ENCODE measurements at regions of chr7 and their contacts with region 1.

Region 1: GRCh38 chr7:17402628-17403278 is 104.3 kb downstream of the AHR start:
- DNase-seq: no peak
- H3K4me3 Mint-ChIP-seq: peak overlapping the region; percentile 22
- H3K27ac Mint-ChIP-seq: peak overlapping the region; percentile 81
- H3K4me1 Mint-ChIP-seq: peaks cover 35% of the 10 kb centered on the region
- H3K27me3 Mint-ChIP-seq: peaks cover 2% of the 10 kb centered on the region

Region 2: DNA sequence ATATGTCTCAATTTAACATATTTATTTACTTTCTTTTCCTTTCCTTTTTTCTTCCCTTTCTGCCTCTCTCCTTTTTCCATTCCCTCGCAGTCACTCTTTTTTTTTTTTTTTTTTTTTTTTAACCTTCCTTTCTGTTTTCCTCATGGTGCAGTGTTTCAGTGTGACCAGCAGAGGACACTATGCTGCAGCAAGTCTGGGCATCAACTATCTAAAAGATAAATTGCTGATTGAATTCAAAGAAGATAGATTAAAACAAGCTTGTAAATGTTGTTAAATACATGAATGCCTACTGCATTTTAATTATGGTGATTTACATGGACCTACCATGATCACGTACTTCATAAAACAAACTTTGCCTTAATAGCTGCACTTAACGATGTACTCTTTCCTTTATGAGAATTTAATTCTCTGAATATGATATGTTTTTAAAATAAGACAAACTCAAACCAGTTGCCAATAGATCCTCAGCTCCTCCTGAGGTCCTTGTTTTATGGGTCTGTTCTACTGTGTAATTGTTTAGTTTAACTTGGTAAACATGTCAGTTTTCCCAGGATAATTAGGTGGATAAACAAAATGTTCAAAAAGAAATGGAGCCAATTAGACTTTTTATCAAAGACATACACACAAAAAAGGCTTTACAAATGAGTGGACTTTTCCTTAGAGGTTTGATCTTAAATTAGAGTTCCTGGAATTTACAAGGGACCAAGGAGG is 420.0 kb before region 1 on chr7:
- intact Hi-C with region 1: loop called (anchors 2 kb)
- DNase-seq: no peak
- H3K4me3 Mint-ChIP-seq: peak overlapping the region; percentile 51
- H3K27ac Mint-ChIP-seq: no peak overlapping the region
- H3K4me1 Mint-ChIP-seq: peaks cover 17% of the 10 kb centered on the region
- H3K27me3 Mint-ChIP-seq: peaks cover 49% of the 10 kb centered on the region

Region 3: DNA sequence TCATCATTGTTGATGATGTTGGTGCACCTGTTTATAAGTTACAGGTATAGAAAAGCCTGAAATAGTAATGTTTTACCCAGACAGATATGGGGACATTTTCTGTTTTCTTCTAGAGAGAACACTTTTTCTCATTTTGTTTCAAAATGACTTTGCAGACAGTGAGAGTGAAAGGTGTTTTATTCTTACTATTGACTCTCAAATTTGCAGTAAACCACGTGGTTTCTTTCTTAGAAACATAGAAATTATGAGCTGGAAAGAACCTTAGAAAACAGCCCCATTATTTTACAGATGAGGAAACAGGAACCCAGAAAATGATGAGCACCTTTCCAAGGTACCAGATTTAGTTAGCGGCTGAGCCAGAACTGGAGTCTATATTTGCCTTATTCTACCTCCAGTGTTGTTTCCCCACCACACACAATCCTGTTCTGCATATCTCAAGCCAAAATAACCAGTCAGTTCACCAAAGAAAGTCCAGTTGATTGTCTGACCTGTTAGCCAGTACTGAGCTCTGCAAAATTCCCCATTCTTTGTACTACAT is 243.2 kb before region 1 on chr7:
- intact Hi-C with region 1: loop called (anchors 2 kb)
- DNase-seq: no peak
- H3K4me3 Mint-ChIP-seq: no peak overlapping the region
- H3K27ac Mint-ChIP-seq: peak overlapping the region; percentile 36
- H3K4me1 Mint-ChIP-seq: peaks cover 50% of the 10 kb centered on the region
- H3K27me3 Mint-ChIP-seq: no peaks in the 10 kb centered on the region

Region 4: DNA sequence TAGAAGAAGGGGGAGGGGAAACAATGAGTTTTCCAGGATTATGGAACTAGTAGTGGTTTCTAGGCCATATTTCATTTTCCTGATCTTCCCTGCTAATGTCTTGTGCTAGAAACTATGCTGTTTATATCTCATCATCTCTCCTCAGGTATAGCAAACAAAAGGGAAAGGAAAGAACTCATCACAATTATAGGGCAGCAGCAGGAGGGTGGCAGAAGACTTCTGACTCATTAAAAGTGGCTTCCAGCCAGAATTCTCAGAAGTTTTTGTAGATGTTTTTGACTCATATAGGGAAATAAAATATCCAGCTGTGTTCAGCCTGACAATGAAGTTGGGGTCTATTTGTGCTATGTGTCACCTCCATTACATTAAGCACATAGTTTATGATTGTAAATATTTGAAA is 97.8 kb before region 1 on chr7:
- intact Hi-C with region 1: loop called (anchors 1 kb)
- DNase-seq: no peak
- H3K4me3 Mint-ChIP-seq: peak overlapping the region; percentile 45
- H3K27ac Mint-ChIP-seq: peak overlapping the region; percentile 59
- H3K4me1 Mint-ChIP-seq: peaks cover 29% of the 10 kb centered on the region
- H3K27me3 Mint-ChIP-seq: no peaks in the 10 kb centered on the region

Region 5: GRCh38 chr7:17369691-17370090 is 33.1 kb before region 1 on chr7:
- intact Hi-C with region 1: loop called (anchors 5 kb)
- DNase-seq: no peak
- H3K4me3 Mint-ChIP-seq: no peak overlapping the region
- H3K27ac Mint-ChIP-seq: no peak overlapping the region
- H3K4me1 Mint-ChIP-seq: peaks cover 20% of the 10 kb centered on the region
- H3K27me3 Mint-ChIP-seq: no peaks in the 10 kb centered on the region

Region 6: GRCh38 chr7:17422966-17423365 is 20.2 kb after region 1 on chr7:
- intact Hi-C with region 1: no loop called
- DNase-seq: no peak
- H3K4me3 Mint-ChIP-seq: no peak overlapping the region
- H3K27ac Mint-ChIP-seq: no peak overlapping the region
- H3K4me1 Mint-ChIP-seq: no peaks in the 10 kb centered on the region
- H3K27me3 Mint-ChIP-seq: peaks cover 2% of the 10 kb centered on the region

Measured in activated T-helper 2 cell treated with anti-CD3 and anti-CD28 coated beads, Interferon-gamma antibody, Interleukin-2, Interleukin-4, amounts not matched to agents 10 μg/mL and 5 μg/mL and 100 μg/mL, durations not matched to agents 14 hours and 24 hours and 36 hours (primary cell).